Endothelial cell of umbilical vein (primary cell): ENCODE measurements at regions of chr14 and their contacts with region 1.

Region 1: GRCh38 chr14:59337141-59337611 is 128.0 kb downstream of the GPR135 start:
- DNase-seq: peak; percentile 70
- H3K4me3 ChIP-seq: no peak overlapping the region
- H3K27ac ChIP-seq: peak overlapping the region; percentile 87
- H3K4me1 ChIP-seq: peaks cover 61% of the 10 kb centered on the region
- H3K27me3 ChIP-seq: no peaks in the 10 kb centered on the region
- CTCF ChIP-seq: no peak
- POLR2A ChIP-seq: no peak

Region 2: GRCh38 chr14:59275653-59276052 is 61.5 kb before region 1 on chr14:
- CTCF ChIA-PET with region 1: no interaction called
- POLR2A ChIA-PET with region 1: no interaction called
- dilution Hi-C with region 1: no loop called
- intact Hi-C with region 1: loop called (anchors 1 kb)
- DNase-seq: peak; percentile 89
- H3K4me3 ChIP-seq: no peak overlapping the region
- H3K27ac ChIP-seq: peak overlapping the region; percentile 60
- H3K4me1 ChIP-seq: peaks cover 43% of the 10 kb centered on the region
- H3K27me3 ChIP-seq: no peaks in the 10 kb centered on the region
- CTCF ChIP-seq: no peak
- POLR2A ChIP-seq: no peak

Region 3: DNA sequence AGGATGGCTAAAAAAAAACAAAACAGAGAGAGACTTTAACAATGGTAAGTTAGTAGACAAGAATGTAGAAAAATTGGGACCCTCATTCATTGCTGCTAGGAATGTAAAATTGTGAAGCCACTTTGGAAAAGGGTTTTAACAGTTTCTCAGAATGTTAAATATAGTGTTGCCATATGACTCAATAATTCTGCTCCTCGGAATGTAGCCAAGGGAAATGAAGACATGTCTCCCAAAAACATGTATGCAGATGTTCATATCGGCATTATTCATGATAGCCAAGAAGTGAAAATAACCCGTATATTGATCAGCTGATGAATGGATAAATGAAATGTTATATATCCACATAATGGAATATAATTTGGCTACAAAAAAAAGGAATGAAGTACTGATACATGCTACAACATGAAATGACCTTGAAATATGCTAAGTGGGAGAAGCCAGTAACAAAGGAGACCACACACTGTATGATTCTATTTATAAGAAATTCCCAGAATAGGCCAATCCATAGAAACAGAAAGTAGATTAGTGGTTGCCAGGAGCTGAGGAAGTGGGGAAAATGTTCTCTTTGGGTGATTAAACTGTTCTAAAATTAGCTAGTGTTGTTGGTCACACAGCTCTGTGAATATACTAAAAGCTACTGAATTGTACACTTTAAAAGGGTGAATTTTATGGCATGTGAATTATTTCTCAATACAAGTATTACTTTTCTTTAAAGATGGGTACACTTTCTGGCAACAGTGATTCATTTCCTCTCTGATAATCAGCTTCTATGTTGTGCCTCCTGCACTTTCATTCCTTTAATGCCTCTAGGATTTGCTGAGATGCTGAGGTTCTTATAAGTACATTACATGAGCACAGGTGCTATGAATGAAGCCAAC is 16.2 kb before region 1 on chr14:
- CTCF ChIA-PET with region 1: interaction called, 9 read pairs
- POLR2A ChIA-PET with region 1: interaction called, 3 read pairs
- dilution Hi-C with region 1: no loop called
- intact Hi-C with region 1: loop called (anchors 1 kb)
- DNase-seq: peak; percentile 90
- H3K4me3 ChIP-seq: peak overlapping the region in 1 of 3 experiments; percentile 23
- H3K27ac ChIP-seq: peak overlapping the region; percentile 84
- H3K4me1 ChIP-seq: peaks cover 21% of the 10 kb centered on the region
- H3K27me3 ChIP-seq: no peaks in the 10 kb centered on the region
- CTCF ChIP-seq: no peak
- POLR2A ChIP-seq: peak; percentile 29

Region 4: GRCh38 chr14:59363531-59364226 is 26.5 kb after region 1 on chr14:
- CTCF ChIA-PET with region 1: interaction called, 4 read pairs
- POLR2A ChIA-PET with region 1: no interaction called
- dilution Hi-C with region 1: no loop called
- intact Hi-C with region 1: loop called (anchors 2 kb)
- DNase-seq: peak; percentile 74
- H3K4me3 ChIP-seq: peak overlapping the region in 1 of 3 experiments; percentile 40
- H3K27ac ChIP-seq: peak overlapping the region; percentile 73
- H3K4me1 ChIP-seq: peaks cover 43% of the 10 kb centered on the region
- H3K27me3 ChIP-seq: no peaks in the 10 kb centered on the region
- CTCF ChIP-seq: no peak
- POLR2A ChIP-seq: no peak